Calu3 (cell line): ENCODE measurements at regions of chr7 and their contacts with region 1.

Region 1: GRCh38 chr7:122143751-122144711 is at the start of gene AASS:
- DNase-seq: peak; percentile 91
- H3K4me3 Mint-ChIP-seq: peak within 1 kb of the TSS; percentile 100
- H3K27ac Mint-ChIP-seq: peak within 1 kb of the TSS; percentile 98
- H3K4me1 Mint-ChIP-seq: peaks cover 9% of the 10 kb centered on the region
- H3K27me3 Mint-ChIP-seq: no peaks in the 10 kb centered on the region
- CTCF ChIP-seq: no peak
- total RNA-seq, gene AASS: 12.7 and 18.7 TPM in 2 replicates

Region 2: GRCh38 chr7:122166708-122167107 is 22.7 kb after region 1 on chr7:
- CTCF ChIA-PET with region 1: no interaction called
- intact Hi-C with region 1: loop called (anchors 2 kb)
- DNase-seq: peak; percentile 30
- H3K4me3 Mint-ChIP-seq: no peak overlapping the region
- H3K27ac Mint-ChIP-seq: no peak overlapping the region
- H3K4me1 Mint-ChIP-seq: peaks cover 5% of the 10 kb centered on the region
- H3K27me3 Mint-ChIP-seq: no peaks in the 10 kb centered on the region
- CTCF ChIP-seq: no peak

Region 3: DNA sequence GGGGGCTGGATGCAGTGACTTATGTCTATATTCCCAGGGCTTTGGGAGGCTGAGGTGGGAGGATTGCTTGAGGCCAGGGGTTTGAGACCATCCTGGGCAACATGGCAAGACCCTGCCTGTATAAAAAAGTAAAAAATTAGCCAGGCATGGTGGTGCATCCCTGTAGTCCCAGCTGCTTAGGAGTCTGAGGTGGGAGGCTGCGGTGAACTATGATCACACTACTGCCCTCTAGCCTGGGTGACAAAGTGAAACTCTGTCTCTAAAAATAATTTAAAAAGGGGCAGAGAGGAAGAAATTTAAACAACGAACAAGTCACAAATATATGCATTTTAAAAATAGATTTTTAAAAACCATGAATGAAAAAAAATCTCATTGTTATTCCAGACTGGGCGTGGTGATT is 206.7 kb after region 1 on chr7:
- CTCF ChIA-PET with region 1: no interaction called
- intact Hi-C with region 1: no loop called
- DNase-seq: no peak
- H3K4me3 Mint-ChIP-seq: no peak overlapping the region
- H3K27ac Mint-ChIP-seq: no peak overlapping the region
- H3K4me1 Mint-ChIP-seq: no peaks in the 10 kb centered on the region
- H3K27me3 Mint-ChIP-seq: no peaks in the 10 kb centered on the region
- CTCF ChIP-seq: no peak